GM12878 (cell line): ENCODE measurements at regions of chr13 and their contacts with region 1.

Region 1: GRCh38 chr13:83009987-83010386 is 872.3 kb downstream of the SLITRK1 start:
- DNase-seq: no peak
- ATAC-seq: no peak
- H3K4me3 ChIP-seq: no peak overlapping the region
- H3K27ac ChIP-seq: no peak overlapping the region
- H3K4me1 ChIP-seq: no peaks in the 10 kb centered on the region
- H3K27me3 ChIP-seq: no peaks in the 10 kb centered on the region
- CTCF ChIP-seq: no peak
- EP300 ChIP-seq: no peak
- POLR2A ChIP-seq: no peak
- RAD21 ChIP-seq: no peak

Region 2: DNA sequence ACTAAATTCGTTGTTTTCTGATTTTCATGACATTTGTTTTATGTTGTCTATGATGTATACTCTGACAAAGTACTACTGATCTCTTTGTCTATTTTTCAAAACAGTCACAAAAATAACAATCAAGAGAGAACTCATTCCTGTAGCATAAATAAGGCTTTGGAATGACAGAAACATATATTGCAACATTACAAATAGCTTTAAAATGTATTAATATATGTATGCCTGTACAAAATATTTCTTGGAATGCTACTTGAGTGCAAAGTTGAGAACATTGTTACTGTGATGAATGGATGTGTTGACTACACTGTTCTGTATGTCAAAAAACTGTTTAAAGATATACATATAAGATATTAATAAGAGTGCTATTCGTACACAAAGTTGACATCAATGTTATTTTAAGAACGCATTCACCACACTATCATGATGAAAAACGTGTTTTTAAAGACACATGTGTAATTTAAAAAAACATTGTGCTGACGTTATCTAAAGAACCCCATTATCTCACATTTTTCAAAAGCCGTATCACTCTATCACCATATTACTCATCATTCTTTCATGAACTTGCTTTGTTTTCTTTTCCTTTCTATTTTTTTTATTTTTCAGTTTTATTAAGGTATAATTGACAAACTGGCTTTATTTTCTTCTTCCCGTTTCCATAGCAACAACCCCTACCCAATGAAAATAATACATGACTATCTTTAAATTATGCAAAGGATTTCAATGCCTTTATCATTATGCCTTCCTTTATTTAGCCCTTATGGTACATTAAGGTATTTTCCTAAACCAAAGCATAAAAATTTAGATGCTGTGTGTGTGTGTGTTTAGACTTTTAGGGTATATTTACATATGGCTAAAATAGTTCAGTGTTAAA is 46.5 kb before region 1 on chr13:
- CTCF ChIA-PET with region 1: no interaction called
- POLR2A ChIA-PET with region 1: no interaction called
- RAD21 ChIA-PET with region 1: no interaction called
- SMC1A ChIA-PET with region 1: no interaction called
- in situ Hi-C with region 1: no loop called
- intact Hi-C with region 1: loop called (anchors 5 kb)
- DNase-seq: no peak
- ATAC-seq: no peak
- H3K4me3 ChIP-seq: no peak overlapping the region
- H3K27ac ChIP-seq: no peak overlapping the region
- H3K4me1 ChIP-seq: no peaks in the 10 kb centered on the region
- H3K27me3 ChIP-seq: no peaks in the 10 kb centered on the region
- CTCF ChIP-seq: no peak
- EP300 ChIP-seq: no peak
- POLR2A ChIP-seq: no peak
- RAD21 ChIP-seq: no peak

Region 3: DNA sequence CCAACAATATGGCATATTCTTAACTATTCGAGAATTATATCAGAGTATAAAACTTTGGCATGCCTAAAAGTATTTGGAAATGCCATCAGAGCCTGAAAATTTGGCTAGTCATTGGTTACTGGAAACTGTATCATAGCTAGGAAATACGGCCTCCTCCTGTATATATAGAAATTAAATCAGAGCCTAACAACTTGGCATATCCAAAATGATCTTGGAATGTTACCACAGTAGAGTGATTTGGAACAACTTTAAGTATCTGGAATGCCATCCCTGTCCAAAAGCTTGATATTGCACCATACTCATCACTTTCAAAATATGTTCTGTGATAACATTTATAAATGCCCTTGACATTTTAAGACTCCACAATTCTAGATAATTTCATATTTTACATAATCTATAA is 536.5 kb after region 1 on chr13:
- CTCF ChIA-PET with region 1: no interaction called
- POLR2A ChIA-PET with region 1: no interaction called
- RAD21 ChIA-PET with region 1: no interaction called
- SMC1A ChIA-PET with region 1: no interaction called
- in situ Hi-C with region 1: no loop called
- intact Hi-C with region 1: no loop called
- DNase-seq: no peak
- ATAC-seq: no peak
- H3K4me3 ChIP-seq: no peak overlapping the region
- H3K27ac ChIP-seq: no peak overlapping the region
- H3K4me1 ChIP-seq: no peaks in the 10 kb centered on the region
- H3K27me3 ChIP-seq: no peaks in the 10 kb centered on the region
- CTCF ChIP-seq: no peak
- EP300 ChIP-seq: no peak
- POLR2A ChIP-seq: no peak
- RAD21 ChIP-seq: no peak